ENCODE measurements at regions of chr17 and their contacts with region 1.

Region 1: GRCh38 chr17:50361561-50362480 is 11.2 kb downstream of the MRPL27 start:
- DNase-seq: peak in 8 of 9 experiments; percentile 32 to 83 (median 59)
- ATAC-seq: peak; percentile 94
- H3K4me3 ChIP-seq: no peak overlapping the region
- H3K4me3 Mint-ChIP-seq: peak overlapping the region; percentile 49
- H3K27ac ChIP-seq: peak overlapping the region in 1 of 2 experiments; percentile 32
- H3K27ac Mint-ChIP-seq: peak overlapping the region; percentile 70
- H3K4me1 ChIP-seq: peaks cover 6% of the 10 kb centered on the region
- H3K4me1 Mint-ChIP-seq: peaks cover 22% of the 10 kb centered on the region
- H3K27me3 ChIP-seq: no peaks in the 10 kb centered on the region
- H3K27me3 Mint-ChIP-seq: no peaks in the 10 kb centered on the region
- CTCF ChIP-seq: peak; percentile 79

Region 2: GRCh38 chr17:49822829-49823228 is 539.0 kb before region 1 on chr17:
- CTCF ChIA-PET with region 1: no interaction called
- POLR2A ChIA-PET with region 1: no interaction called
- intact Hi-C with region 1: no loop called
- DNase-seq: no peak
- ATAC-seq: no peak
- H3K4me3 ChIP-seq: no peak overlapping the region
- H3K4me3 Mint-ChIP-seq: no peak overlapping the region
- H3K27ac ChIP-seq: no peak overlapping the region
- H3K27ac Mint-ChIP-seq: peak overlapping the region; percentile 37
- H3K4me1 ChIP-seq: peaks cover 42% of the 10 kb centered on the region
- H3K4me1 Mint-ChIP-seq: peaks cover 44% of the 10 kb centered on the region
- H3K27me3 ChIP-seq: no peaks in the 10 kb centered on the region
- H3K27me3 Mint-ChIP-seq: no peaks in the 10 kb centered on the region
- CTCF ChIP-seq: no peak

Region 3: DNA sequence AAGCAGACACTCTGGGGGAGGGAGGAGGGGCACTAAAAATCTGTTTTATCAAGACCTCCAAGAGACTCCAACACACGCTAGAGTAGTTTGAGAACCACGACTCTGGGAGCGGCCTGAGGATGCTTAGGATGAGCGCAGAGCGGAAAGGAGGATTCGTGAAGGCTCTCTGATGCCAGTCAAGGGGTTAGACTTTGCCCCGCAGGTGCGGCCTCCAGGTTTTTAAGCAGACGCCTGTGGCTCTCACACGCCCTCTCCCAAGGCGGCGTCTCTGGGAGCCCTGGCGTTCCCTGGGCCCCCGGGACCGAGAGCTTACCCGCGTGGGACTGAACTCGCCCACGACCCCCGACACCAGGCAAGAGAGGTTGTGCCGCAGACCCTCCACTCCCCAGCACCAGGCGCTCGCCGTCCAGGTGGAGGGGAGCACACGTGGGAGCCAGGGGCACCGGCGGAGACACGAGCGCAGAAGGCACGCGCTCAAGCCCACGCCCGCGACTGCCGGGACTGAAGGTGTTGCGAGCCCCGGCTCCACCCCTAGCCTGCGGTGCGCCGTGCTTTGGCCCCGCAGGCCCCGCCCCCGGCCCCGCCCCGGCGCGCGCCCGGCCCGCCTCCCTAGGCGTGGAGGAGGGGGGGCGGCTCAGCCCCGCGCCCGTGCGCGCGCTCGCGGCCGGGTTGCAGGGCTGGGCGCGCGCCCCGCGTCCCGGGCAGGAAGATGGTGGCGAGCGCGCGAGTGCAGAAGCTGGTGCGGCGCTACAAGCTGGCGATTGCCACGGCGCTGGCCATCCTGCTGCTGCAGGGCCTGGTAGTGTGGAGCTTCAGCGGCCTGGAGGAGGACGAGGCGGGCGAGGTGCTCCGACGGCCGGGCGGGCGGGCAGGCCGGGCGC is 16.1 kb before region 1 on chr17 and contains the start of gene XYLT2:
- CTCF ChIA-PET with region 1: interaction called, 21 read pairs
- POLR2A ChIA-PET with region 1: interaction called, 8 read pairs
- intact Hi-C with region 1: no loop called
- DNase-seq: peak; percentile 83 to 96 (median 93)
- ATAC-seq: peak; percentile 94
- H3K4me3 ChIP-seq: peak within 1 kb of the TSS; percentile 78 to 90
- H3K4me3 Mint-ChIP-seq: peak within 1 kb of the TSS; percentile 93
- H3K27ac ChIP-seq: peak within 1 kb of the TSS; percentile 56 to 77
- H3K27ac Mint-ChIP-seq: peak within 1 kb of the TSS; percentile 91
- H3K4me1 ChIP-seq: peaks cover 29% of the 10 kb centered on the region
- H3K4me1 Mint-ChIP-seq: peaks cover 37% of the 10 kb centered on the region
- H3K27me3 ChIP-seq: no peaks in the 10 kb centered on the region
- H3K27me3 Mint-ChIP-seq: no peaks in the 10 kb centered on the region
- CTCF ChIP-seq: no peak
- total RNA-seq, gene XYLT2: 9.0 to 9.4 TPM

Region 4: DNA sequence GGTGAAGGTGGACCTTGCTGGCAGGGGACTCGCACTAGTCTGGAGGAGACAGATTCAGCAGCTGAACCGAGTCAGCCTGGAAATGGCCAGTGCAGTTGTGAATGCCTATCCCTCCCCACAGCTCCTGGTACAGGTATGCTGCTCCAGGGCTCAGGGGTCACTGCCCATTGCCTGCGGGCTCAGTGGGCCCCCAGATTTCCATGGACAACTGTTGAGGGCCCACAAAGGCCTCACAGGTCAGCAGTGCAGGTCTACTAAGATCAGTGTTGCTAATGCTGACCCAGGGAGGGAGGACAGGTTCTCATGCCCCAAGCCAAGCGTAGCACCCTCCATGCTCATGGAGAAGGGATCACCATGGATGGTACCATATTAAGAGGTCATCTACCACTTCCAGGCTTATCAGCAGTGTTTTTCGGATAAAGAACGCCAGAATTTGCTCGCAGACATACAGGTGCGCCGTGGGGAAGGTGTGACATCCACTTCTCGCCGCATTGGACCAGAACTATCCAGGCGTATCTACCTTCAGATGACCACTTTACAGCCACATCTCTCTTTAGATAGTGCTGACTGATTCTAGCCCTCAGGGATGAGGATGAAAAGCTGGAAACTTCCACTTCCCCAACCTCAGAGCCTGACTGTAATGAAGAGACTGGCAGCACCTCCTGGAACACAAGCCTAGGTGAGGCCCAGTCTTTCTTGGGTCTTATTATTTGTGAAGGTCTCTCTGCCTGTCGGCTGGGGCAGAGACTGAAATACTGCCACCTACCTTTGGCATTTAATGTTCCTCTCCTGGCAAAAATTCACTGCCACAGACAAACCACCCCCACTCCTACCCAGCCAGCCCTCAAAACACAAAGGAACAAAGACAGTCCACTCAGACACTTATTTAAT is 18.8 kb after region 1 on chr17:
- CTCF ChIA-PET with region 1: interaction called, 11 read pairs
- POLR2A ChIA-PET with region 1: interaction called, 4 read pairs
- intact Hi-C with region 1: no loop called
- DNase-seq: no peak
- ATAC-seq: peak; percentile 23
- H3K4me3 ChIP-seq: no peak overlapping the region
- H3K4me3 Mint-ChIP-seq: no peak overlapping the region
- H3K27ac ChIP-seq: no peak overlapping the region
- H3K27ac Mint-ChIP-seq: no peak overlapping the region
- H3K4me1 ChIP-seq: no peaks in the 10 kb centered on the region
- H3K4me1 Mint-ChIP-seq: no peaks in the 10 kb centered on the region
- H3K27me3 ChIP-seq: no peaks in the 10 kb centered on the region
- H3K27me3 Mint-ChIP-seq: no peaks in the 10 kb centered on the region
- CTCF ChIP-seq: no peak

Region 5: DNA sequence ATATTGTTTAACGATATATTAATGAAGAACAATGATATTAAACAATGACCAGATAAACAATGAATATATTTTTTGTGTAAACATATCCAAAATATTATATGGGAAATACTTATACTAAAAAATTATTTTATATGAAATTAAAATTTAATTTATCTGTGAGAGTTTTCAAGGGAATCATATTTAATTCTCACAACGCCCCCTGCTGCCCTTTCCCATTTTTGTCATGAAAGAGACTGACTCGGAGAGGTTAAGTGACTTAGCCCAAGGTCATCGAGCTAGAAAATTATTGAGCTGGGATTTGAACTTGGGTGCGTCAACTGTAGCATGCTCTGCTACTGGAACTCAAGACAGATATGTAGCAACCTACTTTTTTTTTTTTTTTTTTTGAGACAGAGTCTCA is 139.2 kb after region 1 on chr17:
- CTCF ChIA-PET with region 1: interaction called, 14 read pairs
- POLR2A ChIA-PET with region 1: no interaction called
- intact Hi-C with region 1: no loop called
- DNase-seq: peak in 3 of 9 experiments; percentile 33 to 42 (median 34)
- ATAC-seq: no peak
- H3K4me3 ChIP-seq: no peak overlapping the region
- H3K4me3 Mint-ChIP-seq: no peak overlapping the region
- H3K27ac ChIP-seq: no peak overlapping the region
- H3K27ac Mint-ChIP-seq: no peak overlapping the region
- H3K4me1 ChIP-seq: peaks cover 10% of the 10 kb centered on the region
- H3K4me1 Mint-ChIP-seq: peaks cover 15% of the 10 kb centered on the region
- H3K27me3 ChIP-seq: no peaks in the 10 kb centered on the region
- H3K27me3 Mint-ChIP-seq: no peaks in the 10 kb centered on the region
- CTCF ChIP-seq: peak; percentile 44

Region 6: DNA sequence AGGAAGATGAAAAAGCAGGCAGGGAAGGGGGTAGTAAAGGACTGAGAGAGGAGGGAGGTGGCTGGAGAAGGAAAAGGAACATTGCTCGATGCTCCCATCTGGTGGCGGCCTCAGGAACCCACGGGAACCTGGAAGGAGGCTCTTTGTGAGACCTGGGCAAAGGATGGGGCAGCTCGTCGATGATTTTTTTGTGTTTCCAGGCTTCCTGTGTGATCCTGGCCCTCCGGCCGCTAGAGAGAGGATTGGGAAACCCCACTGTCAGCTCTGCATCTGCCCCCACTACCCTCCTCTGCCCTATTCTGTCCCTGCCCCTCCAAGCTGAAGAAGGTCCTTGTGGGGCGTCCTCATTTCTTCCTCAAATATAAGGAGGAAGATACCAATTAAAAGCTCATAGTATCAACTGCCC is 480.1 kb after region 1 on chr17:
- CTCF ChIA-PET with region 1: no interaction called
- POLR2A ChIA-PET with region 1: no interaction called
- intact Hi-C with region 1: no loop called
- DNase-seq: peak in 8 of 9 experiments; percentile 21 to 67 (median 51)
- ATAC-seq: peak; percentile 69
- H3K4me3 ChIP-seq: no peak overlapping the region
- H3K4me3 Mint-ChIP-seq: no peak overlapping the region
- H3K27ac ChIP-seq: no peak overlapping the region
- H3K27ac Mint-ChIP-seq: no peak overlapping the region
- H3K4me1 ChIP-seq: no peaks in the 10 kb centered on the region
- H3K4me1 Mint-ChIP-seq: no peaks in the 10 kb centered on the region
- H3K27me3 ChIP-seq: no peaks in the 10 kb centered on the region
- H3K27me3 Mint-ChIP-seq: no peaks in the 10 kb centered on the region
- CTCF ChIP-seq: peak; percentile 62